ENCODE measurements at regions of chr22 and their contacts with region 1.

Region 1: GRCh38 chr22:29394931-29395581 is 6.7 kb upstream of the AP1B1 start:
- DNase-seq: no peak
- ATAC-seq: peak; percentile 93
- H3K4me3 ChIP-seq: no peak overlapping the region
- H3K27ac ChIP-seq: no peak overlapping the region
- H3K4me1 ChIP-seq: peaks cover 9% of the 10 kb centered on the region
- H3K27me3 ChIP-seq: no peaks in the 10 kb centered on the region
- CTCF ChIP-seq: peak; percentile 85 to 97 (median 94); a peak in 5 of 6 replicates
- EP300 ChIP-seq: no peak
- POLR2A ChIP-seq: no peak
- RAD21 ChIP-seq: peak; percentile 92

Region 2: GRCh38 chr22:28894334-28894733 is 500.7 kb before region 1 on chr22:
- CTCF ChIA-PET with region 1: no interaction called
- POLR2A ChIA-PET with region 1: no interaction called
- RAD21 ChIA-PET with region 1: no interaction called
- SMC1A ChIA-PET with region 1: no interaction called
- in situ Hi-C with region 1: no loop called
- intact Hi-C with region 1: no loop called
- DNase-seq: no peak
- ATAC-seq: peak; percentile 29
- H3K4me3 ChIP-seq: no peak overlapping the region
- H3K27ac ChIP-seq: no peak overlapping the region
- H3K4me1 ChIP-seq: no peaks in the 10 kb centered on the region
- H3K27me3 ChIP-seq: no peaks in the 10 kb centered on the region; a peak in 1 of 4 replicates
- CTCF ChIP-seq: no peak
- EP300 ChIP-seq: no peak
- POLR2A ChIP-seq: no peak
- RAD21 ChIP-seq: no peak

Region 3: DNA sequence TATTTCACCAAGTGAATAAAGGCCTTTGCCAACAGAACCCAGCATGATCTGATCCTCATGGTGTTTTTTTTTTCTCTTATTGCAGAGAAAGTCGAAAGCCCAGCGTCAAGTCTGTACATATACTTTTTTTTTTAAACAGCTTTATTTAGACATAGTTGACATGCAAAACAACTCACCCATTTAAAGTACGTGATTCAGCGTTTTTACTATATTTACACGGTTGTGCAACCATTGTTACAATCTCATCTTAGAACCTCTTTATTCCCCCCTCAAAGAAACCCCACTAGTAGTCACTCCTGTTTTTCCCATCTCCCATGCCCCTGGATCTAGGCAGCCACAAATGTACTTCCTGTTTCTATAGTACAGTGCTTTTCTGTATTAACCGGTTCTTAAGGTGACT is 13.9 kb after region 1 on chr22:
- CTCF ChIA-PET with region 1: interaction called, 4 read pairs
- POLR2A ChIA-PET with region 1: no interaction called
- RAD21 ChIA-PET with region 1: interaction called, 3 read pairs
- SMC1A ChIA-PET with region 1: interaction called, 4 read pairs
- in situ Hi-C with region 1: no loop called
- intact Hi-C with region 1: loop called (anchors 2 kb)
- DNase-seq: no peak
- ATAC-seq: no peak
- H3K4me3 ChIP-seq: no peak overlapping the region
- H3K27ac ChIP-seq: no peak overlapping the region
- H3K4me1 ChIP-seq: peaks cover 23% of the 10 kb centered on the region
- H3K27me3 ChIP-seq: no peaks in the 10 kb centered on the region
- CTCF ChIP-seq: no peak
- EP300 ChIP-seq: no peak
- POLR2A ChIP-seq: no peak
- RAD21 ChIP-seq: no peak

Region 4: DNA sequence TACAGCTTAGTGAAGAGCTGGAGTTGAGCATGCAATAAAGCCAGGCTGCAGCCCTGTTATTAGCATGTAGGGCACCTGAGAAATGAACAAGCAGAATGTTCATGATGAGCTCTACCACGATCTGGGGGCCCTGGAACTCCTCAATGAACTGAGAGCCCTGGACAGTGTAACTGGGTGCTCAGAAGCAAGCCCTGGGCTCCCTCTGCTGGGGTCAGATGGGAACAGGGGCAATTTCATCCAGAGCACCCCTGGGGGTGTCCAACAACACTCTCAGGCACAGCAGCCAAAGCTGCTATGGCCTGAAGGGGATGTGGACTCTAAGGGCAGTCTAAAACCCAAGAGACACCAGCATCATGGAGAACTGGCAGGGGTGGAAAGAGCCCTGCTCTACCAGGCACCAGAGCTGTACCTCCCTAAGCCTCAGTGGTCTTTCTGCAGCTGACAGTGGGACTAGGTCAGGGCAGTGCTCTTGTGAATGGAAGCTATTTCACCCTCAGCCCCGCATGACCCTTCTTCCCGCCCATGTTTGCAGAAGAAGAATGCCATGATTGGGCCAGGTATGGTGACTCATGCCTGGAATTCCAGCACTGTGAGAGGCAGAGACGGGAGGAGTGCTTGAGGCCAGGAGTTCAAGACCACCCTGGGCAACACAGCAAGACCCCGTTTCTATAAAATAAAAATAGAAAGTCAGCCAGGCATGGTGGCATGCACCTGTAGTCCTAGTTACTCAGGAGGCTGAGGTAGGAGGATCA is 129.6 kb after region 1 on chr22:
- CTCF ChIA-PET with region 1: interaction called, 16 read pairs
- POLR2A ChIA-PET with region 1: no interaction called
- RAD21 ChIA-PET with region 1: interaction called, 17 read pairs
- SMC1A ChIA-PET with region 1: interaction called, 14 read pairs
- in situ Hi-C with region 1: loop called (anchors 5 kb)
- intact Hi-C with region 1: loop called (anchors 1 kb)
- DNase-seq: no peak
- ATAC-seq: peak; percentile 87
- H3K4me3 ChIP-seq: no peak overlapping the region
- H3K27ac ChIP-seq: no peak overlapping the region
- H3K4me1 ChIP-seq: no peaks in the 10 kb centered on the region
- H3K27me3 ChIP-seq: no peaks in the 10 kb centered on the region
- CTCF ChIP-seq: peak; percentile 53 to 61 (median 55); a peak in 5 of 6 replicates
- EP300 ChIP-seq: no peak
- POLR2A ChIP-seq: no peak
- RAD21 ChIP-seq: peak; percentile 70

Region 5: GRCh38 chr22:29635734-29636357 is 240.8 kb after region 1 on chr22:
- CTCF ChIA-PET with region 1: interaction called, 12 read pairs
- POLR2A ChIA-PET with region 1: no interaction called
- RAD21 ChIA-PET with region 1: no interaction called
- SMC1A ChIA-PET with region 1: interaction called, 3 read pairs
- in situ Hi-C with region 1: no loop called
- intact Hi-C with region 1: no loop called
- DNase-seq: peak; percentile 23
- ATAC-seq: peak; percentile 78
- H3K4me3 ChIP-seq: no peak overlapping the region
- H3K27ac ChIP-seq: no peak overlapping the region
- H3K4me1 ChIP-seq: peaks cover 11% of the 10 kb centered on the region
- H3K27me3 ChIP-seq: no peaks in the 10 kb centered on the region
- CTCF ChIP-seq: peak; percentile 62 to 79 (median 70)
- EP300 ChIP-seq: no peak
- POLR2A ChIP-seq: no peak
- RAD21 ChIP-seq: peak; percentile 72

Measured in GM12878 (cell line).